ENCODE measurements at regions of chr2 and their contacts with region 1.

Region 1: DNA sequence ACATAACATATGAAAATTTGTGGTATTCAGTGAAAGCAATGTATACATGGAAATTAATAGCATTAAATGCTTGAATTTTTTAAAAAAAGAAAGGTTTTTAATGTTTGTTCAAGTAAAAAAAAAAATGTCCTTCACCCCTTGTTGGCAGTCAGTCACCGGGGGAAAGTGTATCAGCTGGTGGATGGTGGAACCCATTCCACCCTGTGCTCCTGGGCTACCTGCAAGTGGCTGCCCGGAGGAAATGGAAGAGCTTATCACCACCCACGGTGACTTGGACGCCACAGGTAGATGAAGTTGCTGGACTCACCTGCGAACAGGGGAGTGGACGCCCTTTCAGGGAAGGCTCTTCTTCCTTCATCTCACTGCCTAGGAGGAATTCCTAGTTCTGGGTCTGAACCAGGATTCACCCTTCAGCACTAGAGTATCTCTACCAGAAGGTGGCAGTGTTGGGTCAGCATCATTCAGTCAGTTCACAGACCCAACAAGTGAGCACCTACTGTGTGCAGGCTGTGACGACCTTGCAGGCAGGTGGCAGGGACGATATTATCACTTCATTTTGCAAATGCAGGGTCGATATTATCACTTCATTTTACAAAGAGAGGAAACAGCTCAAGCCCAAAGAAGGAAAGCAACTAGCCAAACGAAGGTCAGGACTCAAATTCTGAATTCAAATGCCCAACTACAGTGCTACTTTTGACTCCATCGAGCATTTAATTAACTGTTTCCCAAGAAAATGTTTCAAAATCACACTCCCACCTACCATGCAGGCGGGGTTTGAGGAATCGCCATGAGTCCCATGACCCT is 35.8 kb downstream of the CIB4 start:
- DNase-seq: peak in 2 of 6 donors; percentile 26 to 56
- ATAC-seq: peak; percentile 44 to 77 (median 73)
- H3K4me3 ChIP-seq: no peak overlapping the region
- H3K27ac ChIP-seq: no peak overlapping the region
- H3K4me1 ChIP-seq: peaks cover 4 to 26% (median 15%) of the 10 kb centered on the region in 3 donors
- H3K27me3 ChIP-seq: no peaks in the 10 kb centered on the region
- CTCF ChIP-seq: peak; percentile 62 to 74 (median 71)

Region 2: DNA sequence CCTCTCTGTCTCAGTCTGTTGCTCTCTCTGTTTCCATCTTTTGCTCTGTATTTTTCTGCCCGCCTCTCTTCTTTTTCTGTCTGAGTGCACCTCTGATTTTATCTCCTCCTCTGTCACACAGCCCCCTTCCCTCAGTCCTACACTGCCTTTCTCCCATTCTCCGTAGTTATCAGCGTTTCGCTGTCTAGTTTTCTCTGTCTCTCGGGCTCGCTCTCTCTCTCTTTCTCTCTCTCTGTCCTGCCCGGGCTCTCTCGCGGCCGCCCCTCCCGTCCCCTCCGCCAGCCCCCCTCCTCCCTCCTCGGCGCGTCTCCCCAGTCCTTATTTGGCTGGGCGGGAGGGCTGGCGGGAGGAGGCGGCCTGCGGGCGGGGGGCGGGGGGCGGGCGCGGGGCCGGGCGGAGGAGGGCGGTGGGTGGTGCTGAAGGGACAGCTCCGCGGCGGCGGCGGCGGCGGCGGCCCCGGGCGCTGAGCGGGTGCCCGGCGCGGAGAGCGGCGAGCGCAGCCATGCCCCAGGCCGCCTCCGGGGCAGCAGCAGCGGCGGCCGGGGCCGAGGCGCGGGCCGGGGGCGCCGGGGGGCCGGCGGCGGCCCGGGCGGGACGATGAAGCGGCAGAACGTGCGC is 87.0 kb after region 1 on chr2 and contains the start of gene KCNK3:
- intact Hi-C with region 1: no loop called
- DNase-seq: peak; percentile 71 to 87 (median 80)
- ATAC-seq: peak; percentile 29 to 61 (median 40)
- H3K4me3 ChIP-seq: peak within 1 kb of the TSS; percentile 48 to 57 (median 52)
- H3K27ac ChIP-seq: peak within 1 kb of the TSS; percentile 37 to 89 (median 67)
- H3K4me1 ChIP-seq: peaks cover 15 to 45% (median 25%) of the 10 kb centered on the region in 3 donors
- H3K27me3 ChIP-seq: no peaks in the 10 kb centered on the region
- CTCF ChIP-seq: no peak
- total RNA-seq, gene KCNK3: 23.6 to 46.4 (median 31.4) TPM

Region 3: DNA sequence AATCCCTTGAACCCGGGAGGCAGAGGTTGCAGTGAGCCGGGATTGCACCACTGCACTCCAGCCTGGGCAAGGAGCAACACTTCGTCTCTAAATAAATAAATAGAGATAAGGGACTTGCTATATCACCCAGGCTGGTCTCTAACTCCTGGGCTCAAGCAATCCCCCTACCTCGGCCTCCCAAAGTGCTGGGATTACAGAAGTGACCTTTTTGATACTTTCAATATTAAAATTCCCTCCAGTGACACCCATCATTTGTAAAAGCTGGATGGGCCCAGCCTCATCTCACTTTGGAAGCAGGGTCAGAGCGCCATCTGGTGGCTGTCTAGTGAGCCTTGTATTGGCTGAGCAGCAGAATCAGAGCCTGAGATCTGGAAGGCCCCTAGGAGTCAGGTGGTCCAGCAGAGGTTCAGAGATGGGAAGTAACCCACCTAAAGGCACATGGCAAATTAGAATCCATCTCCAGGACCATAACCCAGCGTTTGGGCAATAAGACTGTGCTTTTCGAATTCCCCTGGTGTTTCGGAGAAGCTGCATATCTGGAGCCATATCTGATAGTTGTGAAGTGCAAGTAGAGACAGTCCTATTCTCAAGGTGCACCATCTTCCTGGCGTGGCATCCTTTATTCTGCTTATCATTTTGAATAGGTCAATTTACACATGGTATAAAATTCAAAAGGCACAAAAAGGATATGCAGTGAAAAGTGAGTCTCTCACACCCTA is 140.4 kb after region 1 on chr2:
- intact Hi-C with region 1: loop called (anchors 5 kb)
- DNase-seq: peak; percentile 65 to 92 (median 85)
- ATAC-seq: peak; percentile 87 to 96 (median 94)
- H3K4me3 ChIP-seq: no peak overlapping the region
- H3K27ac ChIP-seq: no peak overlapping the region
- H3K4me1 ChIP-seq: peaks cover 0 to 3% (median 0%) of the 10 kb centered on the region in 3 donors
- H3K27me3 ChIP-seq: no peaks in the 10 kb centered on the region
- CTCF ChIP-seq: peak; percentile 80 to 90 (median 84)

Region 4: GRCh38 chr2:27545348-27546141 is 940.1 kb after region 1 on chr2:
- intact Hi-C with region 1: no loop called
- DNase-seq: no peak
- ATAC-seq: no peak
- H3K4me3 ChIP-seq: no peak overlapping the region
- H3K27ac ChIP-seq: no peak overlapping the region
- H3K4me1 ChIP-seq: no peaks in the 10 kb centered on the region
- H3K27me3 ChIP-seq: no peaks in the 10 kb centered on the region
- CTCF ChIP-seq: no peak

Region 5: GRCh38 chr2:27779417-27780055 is 1174.1 kb after region 1 on chr2:
- intact Hi-C with region 1: no loop called
- DNase-seq: no peak
- ATAC-seq: no peak
- H3K4me3 ChIP-seq: no peak overlapping the region
- H3K27ac ChIP-seq: peak overlapping the region in 1 of 4 donors; percentile 50
- H3K4me1 ChIP-seq: peaks cover 0 to 4% (median 4%) of the 10 kb centered on the region in 3 donors
- H3K27me3 ChIP-seq: no peaks in the 10 kb centered on the region
- CTCF ChIP-seq: no peak

Measured in pancreas (tissue), 10 donors.